IMR-90 (cell line): ENCODE measurements at regions of chr1 and their contacts with region 1.

Region 1: DNA sequence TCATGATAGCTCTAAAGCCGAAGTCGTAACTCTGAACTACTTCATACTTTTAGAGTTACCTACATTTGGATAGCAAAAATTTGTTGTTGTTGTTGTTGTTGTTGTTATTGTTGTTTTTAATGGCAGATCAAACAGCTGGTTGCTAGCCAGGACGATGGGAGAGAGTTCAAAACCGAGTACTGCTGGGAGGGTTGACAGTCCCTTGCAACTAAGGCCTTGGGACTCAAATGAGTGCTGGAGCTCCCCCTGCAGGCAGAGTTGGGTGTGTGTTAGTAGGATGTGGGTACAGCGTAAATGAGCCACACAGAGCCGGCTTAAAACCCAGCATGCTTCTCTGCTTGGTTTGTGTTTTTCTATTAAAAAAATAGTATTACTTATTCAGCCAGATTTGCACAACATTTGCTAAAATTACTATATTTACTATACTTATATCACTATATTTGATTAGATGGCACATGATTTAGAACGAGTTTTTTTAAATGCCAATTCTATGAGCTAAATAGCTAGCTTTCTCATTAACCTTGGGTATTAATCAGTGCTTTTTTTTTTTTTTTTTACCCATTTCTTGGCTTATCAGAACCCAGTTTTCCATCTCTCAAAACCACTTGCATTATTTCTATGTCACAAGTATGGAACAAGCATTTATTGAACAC is 129.2 kb upstream of the SYT6 start:
- DNase-seq: peak; percentile 87
- ATAC-seq: peak; percentile 100
- H3K4me3 ChIP-seq: no peak overlapping the region
- H3K27ac ChIP-seq: no peak overlapping the region
- H3K4me1 ChIP-seq: peaks cover 2% of the 10 kb centered on the region; the same call in 1 of the 2 replicates
- H3K27me3 ChIP-seq: peaks cover 6% of the 10 kb centered on the region
- CTCF ChIP-seq: peak; percentile 90
- POLR2A ChIP-seq: no peak
- RAD21 ChIP-seq: peak; percentile 74

Region 2: DNA sequence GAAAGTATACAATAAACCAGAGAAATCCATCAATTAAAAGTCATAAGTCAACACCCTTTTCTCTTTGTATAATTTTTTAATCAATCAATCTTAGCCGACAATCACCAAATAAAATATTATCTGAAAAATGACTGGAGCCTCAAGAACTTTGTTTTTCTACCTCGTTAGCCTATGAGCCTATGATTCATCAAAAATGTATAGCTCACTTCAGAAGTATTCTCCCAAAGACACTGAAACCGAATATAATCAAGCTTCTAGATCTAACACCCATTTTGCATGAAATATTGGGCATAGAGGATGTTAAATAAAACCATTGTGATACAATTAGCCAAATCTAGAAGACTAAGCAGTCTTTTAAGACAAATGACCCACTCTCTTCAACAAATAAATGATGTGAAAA is 452.8 kb before region 1 on chr1:
- CTCF ChIA-PET with region 1: no interaction called
- POLR2A ChIA-PET with region 1: no interaction called
- dilution Hi-C with region 1: no loop called
- in situ Hi-C with region 1: no loop called
- intact Hi-C with region 1: loop called (anchors 5 kb)
- DNase-seq: peak; percentile 61
- ATAC-seq: peak; percentile 66
- H3K4me3 ChIP-seq: no peak overlapping the region
- H3K27ac ChIP-seq: no peak overlapping the region
- H3K4me1 ChIP-seq: no peaks in the 10 kb centered on the region
- H3K27me3 ChIP-seq: no peaks in the 10 kb centered on the region
- CTCF ChIP-seq: no peak
- POLR2A ChIP-seq: no peak
- RAD21 ChIP-seq: no peak

Region 3: DNA sequence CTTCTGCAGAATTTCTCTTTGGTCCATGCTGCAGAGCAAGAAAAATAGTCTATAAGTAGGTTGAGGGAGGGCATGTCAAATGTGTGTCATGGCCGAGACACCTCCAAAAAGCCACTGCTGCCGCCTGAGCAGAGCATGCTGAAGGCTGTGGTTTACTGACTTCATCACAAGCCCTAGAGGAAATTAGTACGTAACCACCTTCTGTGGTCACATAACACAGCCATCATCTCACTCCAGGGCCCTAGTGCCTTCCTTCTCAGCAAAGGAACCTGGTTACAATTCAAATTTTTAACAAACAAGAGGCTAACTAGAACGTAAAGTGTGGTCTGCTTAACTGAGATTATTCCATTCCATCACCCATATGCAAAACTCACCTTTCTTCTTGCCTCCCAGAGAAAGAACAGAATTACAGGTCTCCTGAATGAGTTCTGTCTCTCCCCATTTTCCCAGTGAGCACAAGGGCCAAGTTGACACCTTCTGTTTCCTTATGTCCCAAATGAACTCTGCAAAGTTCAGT is 411.2 kb before region 1 on chr1 and contains the start of gene PTPN22:
- CTCF ChIA-PET with region 1: no interaction called
- POLR2A ChIA-PET with region 1: no interaction called
- dilution Hi-C with region 1: no loop called
- in situ Hi-C with region 1: loop called (anchors 25 kb)
- intact Hi-C with region 1: no loop called
- DNase-seq: peak; percentile 83
- ATAC-seq: peak; percentile 84
- H3K4me3 ChIP-seq: no peak within 1 kb of the TSS
- H3K27ac ChIP-seq: no peak within 1 kb of the TSS
- H3K4me1 ChIP-seq: peaks cover 6% of the 10 kb centered on the region; the same call in 1 of the 2 replicates
- H3K27me3 ChIP-seq: no peaks in the 10 kb centered on the region
- CTCF ChIP-seq: no peak
- POLR2A ChIP-seq: no peak
- RAD21 ChIP-seq: no peak
- total RNA-seq, gene PTPN22: 0.18 and 0.28 TPM in 2 replicates

Region 4: GRCh38 chr1:114295321-114295720 is 12.4 kb after region 1 on chr1:
- CTCF ChIA-PET with region 1: interaction called, 10 read pairs
- POLR2A ChIA-PET with region 1: no interaction called
- dilution Hi-C with region 1: no loop called
- in situ Hi-C with region 1: no loop called
- intact Hi-C with region 1: no loop called
- DNase-seq: no peak
- ATAC-seq: no peak
- H3K4me3 ChIP-seq: no peak overlapping the region
- H3K27ac ChIP-seq: no peak overlapping the region
- H3K4me1 ChIP-seq: peaks cover 3% of the 10 kb centered on the region
- H3K27me3 ChIP-seq: peaks cover 25% of the 10 kb centered on the region
- CTCF ChIP-seq: no peak
- POLR2A ChIP-seq: no peak
- RAD21 ChIP-seq: no peak

Region 5: DNA sequence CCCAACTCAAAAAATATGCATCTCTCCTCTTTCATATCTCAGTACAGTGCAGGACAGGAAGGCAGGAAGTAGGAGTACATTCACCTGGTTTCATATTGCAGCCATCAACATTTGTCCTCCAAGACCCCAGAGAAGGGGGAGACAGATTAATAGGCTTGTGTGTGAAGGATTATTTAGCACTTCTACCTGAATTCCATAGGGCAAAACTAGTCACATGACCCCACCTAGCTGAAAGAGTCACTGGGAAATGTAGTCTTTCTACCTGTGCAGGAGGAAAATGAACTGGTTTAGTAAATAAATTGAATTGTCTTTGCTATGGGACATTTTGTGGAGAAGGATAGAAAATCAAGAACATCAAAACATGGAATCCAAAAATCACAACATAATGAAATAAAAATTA is 242.1 kb after region 1 on chr1:
- CTCF ChIA-PET with region 1: no interaction called
- POLR2A ChIA-PET with region 1: no interaction called
- dilution Hi-C with region 1: no loop called
- in situ Hi-C with region 1: no loop called
- intact Hi-C with region 1: no loop called
- DNase-seq: no peak
- ATAC-seq: no peak
- H3K4me3 ChIP-seq: no peak overlapping the region
- H3K27ac ChIP-seq: no peak overlapping the region
- H3K4me1 ChIP-seq: no peaks in the 10 kb centered on the region
- H3K27me3 ChIP-seq: no peaks in the 10 kb centered on the region
- CTCF ChIP-seq: no peak
- POLR2A ChIP-seq: no peak
- RAD21 ChIP-seq: no peak

Region 6: GRCh38 chr1:114627107-114627506 is 344.2 kb after region 1 on chr1:
- CTCF ChIA-PET with region 1: no interaction called
- POLR2A ChIA-PET with region 1: no interaction called
- dilution Hi-C with region 1: no loop called
- in situ Hi-C with region 1: no loop called
- intact Hi-C with region 1: no loop called
- DNase-seq: no peak
- ATAC-seq: no peak; the same call in 1 of the 2 replicates
- H3K4me3 ChIP-seq: no peak overlapping the region
- H3K27ac ChIP-seq: no peak overlapping the region
- H3K4me1 ChIP-seq: no peaks in the 10 kb centered on the region
- H3K27me3 ChIP-seq: no peaks in the 10 kb centered on the region
- CTCF ChIP-seq: no peak
- POLR2A ChIP-seq: no peak
- RAD21 ChIP-seq: no peak